Activated CD4-positive, alpha-beta T cell treated with anti-CD3 and anti-CD28 coated beads for 36 hours (primary cell): ENCODE measurements at regions of chr19 and their contacts with region 1.

Region 1: GRCh38 chr19:35404879-35405622 is 34.2 kb downstream of the GPR42 start:
- DNase-seq: peak; percentile 88
- ATAC-seq: peak; percentile 97
- H3K4me3 Mint-ChIP-seq: no peak overlapping the region
- H3K27ac Mint-ChIP-seq: peak overlapping the region; percentile 88
- H3K4me1 Mint-ChIP-seq: peaks cover 18% of the 10 kb centered on the region
- H3K27me3 Mint-ChIP-seq: peaks cover 8% of the 10 kb centered on the region

Region 2: DNA sequence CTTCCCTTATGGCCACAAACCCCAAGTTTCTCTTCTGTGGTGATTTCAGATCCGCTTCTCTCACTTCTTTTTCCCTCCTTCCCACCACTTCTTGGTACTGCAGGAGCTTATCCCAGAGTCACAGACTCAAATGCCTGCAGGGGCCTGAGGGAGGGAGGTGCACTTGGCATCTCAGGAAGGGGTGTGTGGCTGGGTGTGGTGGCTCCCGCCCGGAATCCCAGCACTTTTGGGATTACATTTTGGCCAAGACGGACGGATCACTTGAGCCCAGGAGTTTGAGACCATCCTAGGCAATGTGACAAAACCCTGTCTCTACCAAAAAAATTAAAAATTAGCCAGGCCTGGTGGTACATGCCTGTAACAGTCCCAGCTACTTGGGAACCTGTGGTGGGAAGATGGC is 130.7 kb before region 1 on chr19:
- CTCF ChIA-PET with region 1: no interaction called
- POLR2A ChIA-PET with region 1: no interaction called
- intact Hi-C with region 1: no loop called
- DNase-seq: no peak
- ATAC-seq: no peak
- H3K4me3 Mint-ChIP-seq: no peak overlapping the region
- H3K27ac Mint-ChIP-seq: peak overlapping the region; percentile 15
- H3K4me1 Mint-ChIP-seq: peaks cover 4% of the 10 kb centered on the region
- H3K27me3 Mint-ChIP-seq: no peaks in the 10 kb centered on the region

Region 3: DNA sequence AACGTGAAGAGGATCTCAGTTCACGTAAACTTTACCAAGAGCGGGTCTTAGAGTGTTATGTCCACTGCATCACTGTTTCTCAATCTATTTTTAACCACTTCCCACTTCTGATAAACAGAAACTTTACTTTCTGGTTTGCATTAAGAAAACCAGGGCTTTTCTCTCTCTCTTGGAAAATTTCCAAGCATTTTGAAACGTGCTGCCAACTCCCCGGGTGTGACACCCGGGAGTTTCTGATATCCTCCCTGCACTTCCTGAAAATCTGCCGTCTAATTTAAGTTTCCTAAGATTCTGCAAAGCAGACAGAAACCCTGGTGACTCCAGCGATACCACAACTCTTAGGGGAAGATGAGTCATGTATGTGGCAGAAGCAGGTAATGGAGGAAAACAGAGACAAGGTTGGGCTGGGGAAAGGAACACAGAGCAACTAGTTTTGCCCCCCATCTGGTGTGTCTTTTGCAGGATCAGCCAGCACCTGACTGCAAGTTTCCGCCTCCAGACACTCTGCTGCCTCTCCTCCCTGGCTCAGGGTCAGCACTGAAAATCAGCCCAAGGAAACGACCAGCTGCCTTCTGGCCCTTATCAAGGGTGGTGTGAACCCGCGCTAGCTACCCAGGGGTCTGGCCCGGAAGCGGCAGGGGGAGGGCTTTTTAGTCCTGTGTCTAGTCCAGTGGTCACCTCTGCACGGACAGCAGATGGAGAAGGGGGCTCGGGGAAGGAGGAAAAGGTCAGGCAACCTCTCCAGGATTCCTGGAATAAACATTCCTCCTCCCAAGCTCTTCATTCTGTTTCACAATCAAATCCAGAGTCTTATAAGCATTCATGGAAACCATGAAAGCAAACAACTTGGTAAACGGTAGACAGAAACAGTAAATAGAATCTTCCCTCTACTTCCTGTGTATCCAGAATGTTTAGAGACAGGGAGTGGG is 31.7 kb after region 1 on chr19:
- CTCF ChIA-PET with region 1: no interaction called
- POLR2A ChIA-PET with region 1: no interaction called
- intact Hi-C with region 1: loop called in 1 of 2 experiments (anchors 1 kb)
- DNase-seq: peak; percentile 49
- ATAC-seq: peak; percentile 95
- H3K4me3 Mint-ChIP-seq: no peak overlapping the region
- H3K27ac Mint-ChIP-seq: peak overlapping the region; percentile 67
- H3K4me1 Mint-ChIP-seq: peaks cover 13% of the 10 kb centered on the region
- H3K27me3 Mint-ChIP-seq: peaks cover 14% of the 10 kb centered on the region

Region 4: GRCh38 chr19:35451338-35452096 is 46.5 kb after region 1 on chr19:
- CTCF ChIA-PET with region 1: no interaction called
- POLR2A ChIA-PET with region 1: no interaction called
- intact Hi-C with region 1: loop called in 1 of 2 experiments (anchors 1 kb)
- DNase-seq: peak; percentile 43
- ATAC-seq: peak; percentile 92
- H3K4me3 Mint-ChIP-seq: no peak overlapping the region
- H3K27ac Mint-ChIP-seq: peak overlapping the region; percentile 43
- H3K4me1 Mint-ChIP-seq: peaks cover 29% of the 10 kb centered on the region
- H3K27me3 Mint-ChIP-seq: peaks cover 18% of the 10 kb centered on the region

Region 5: GRCh38 chr19:35462476-35462953 is 57.5 kb after region 1 on chr19:
- CTCF ChIA-PET with region 1: no interaction called
- POLR2A ChIA-PET with region 1: no interaction called
- intact Hi-C with region 1: loop called in 1 of 2 experiments (anchors 5 kb)
- DNase-seq: peak; percentile 49
- ATAC-seq: peak; percentile 90
- H3K4me3 Mint-ChIP-seq: no peak overlapping the region
- H3K27ac Mint-ChIP-seq: peak overlapping the region; percentile 55
- H3K4me1 Mint-ChIP-seq: peaks cover 24% of the 10 kb centered on the region
- H3K27me3 Mint-ChIP-seq: no peaks in the 10 kb centered on the region

Region 6: DNA sequence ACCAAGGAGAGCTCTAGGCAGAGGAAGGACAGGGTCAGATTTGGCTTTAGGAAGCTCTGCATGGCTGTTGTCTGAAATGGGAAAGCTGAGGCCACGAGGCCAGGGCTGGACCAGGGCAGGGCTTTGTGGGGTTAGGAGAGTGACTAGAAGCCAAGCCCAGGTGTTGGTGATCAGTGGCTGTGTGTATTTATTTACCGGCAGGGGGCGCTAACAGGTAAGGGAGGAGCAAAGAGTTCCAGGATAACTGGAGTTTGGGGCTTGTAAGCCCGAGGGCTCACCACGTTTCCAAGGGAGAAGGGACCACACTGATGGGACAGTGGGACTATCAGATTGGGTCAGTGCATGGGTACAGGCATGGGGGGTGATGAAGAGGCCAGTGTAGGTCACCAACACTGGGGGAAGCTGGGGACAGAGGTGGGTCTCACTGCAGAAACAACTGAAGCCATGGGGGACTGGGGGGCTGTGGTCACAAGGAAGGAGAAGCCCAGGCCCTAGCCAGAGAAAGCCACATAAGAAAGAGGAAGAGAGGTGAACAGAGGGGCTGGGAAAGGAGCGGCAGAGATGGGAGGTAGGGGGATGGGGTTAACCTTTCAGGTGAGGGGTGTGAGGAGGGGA is 144.2 kb after region 1 on chr19:
- CTCF ChIA-PET with region 1: no interaction called
- POLR2A ChIA-PET with region 1: no interaction called
- intact Hi-C with region 1: no loop called
- DNase-seq: peak; percentile 75
- ATAC-seq: no peak
- H3K4me3 Mint-ChIP-seq: no peak overlapping the region
- H3K27ac Mint-ChIP-seq: no peak overlapping the region
- H3K4me1 Mint-ChIP-seq: peaks cover 32% of the 10 kb centered on the region
- H3K27me3 Mint-ChIP-seq: no peaks in the 10 kb centered on the region